WTC11 (cell line): ENCODE measurements at regions of chr17 and their contacts with region 1.

Region 1: DNA sequence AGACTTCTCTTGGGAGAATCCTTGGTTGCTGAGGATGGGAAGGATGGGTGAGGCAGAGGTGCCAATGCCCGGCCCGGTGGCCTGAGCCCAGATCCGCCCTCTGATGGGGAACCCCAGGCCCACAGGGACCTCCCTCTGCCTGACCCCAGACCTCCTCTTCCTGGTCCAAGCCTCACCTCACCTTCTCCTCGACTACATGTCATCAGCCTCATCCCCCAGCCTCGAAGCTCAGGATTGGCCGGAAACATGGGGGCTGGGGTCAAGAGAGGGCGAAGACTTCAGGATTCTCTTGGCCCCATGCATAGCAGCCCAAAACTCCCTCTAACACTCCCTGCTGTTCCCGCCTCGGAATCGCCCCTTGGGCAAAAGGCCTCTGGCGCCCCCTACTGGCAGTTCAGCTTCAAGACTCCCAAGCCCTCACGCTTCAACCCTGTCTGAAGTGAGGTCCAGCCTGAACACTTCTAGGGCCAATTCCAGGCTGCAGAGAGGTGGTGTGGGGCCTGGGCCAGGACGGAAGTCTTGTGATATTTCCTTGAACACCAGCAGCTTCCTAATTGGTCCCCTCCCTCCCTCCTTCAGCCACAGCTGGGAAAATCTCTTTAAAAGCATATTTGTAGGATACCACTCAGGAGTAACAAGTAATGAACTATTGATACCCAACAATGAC is 47.2 kb downstream of the ARHGAP27 start:
- DNase-seq: peak; percentile 94
- ATAC-seq: peak; percentile 86
- H3K4me3 Mint-ChIP-seq: no peak overlapping the region
- H3K27ac Mint-ChIP-seq: no peak overlapping the region
- H3K4me1 Mint-ChIP-seq: peaks cover 24% of the 10 kb centered on the region
- H3K27me3 Mint-ChIP-seq: peaks cover 16% of the 10 kb centered on the region
- CTCF ChIP-seq: peak; percentile 98

Region 2: GRCh38 chr17:45235416-45236281 is 149.8 kb before region 1 on chr17:
- CTCF ChIA-PET with region 1: interaction called, 13 read pairs
- POLR2A ChIA-PET with region 1: no interaction called
- DNase-seq: peak; percentile 94
- ATAC-seq: peak; percentile 69
- H3K4me3 Mint-ChIP-seq: no peak overlapping the region
- H3K27ac Mint-ChIP-seq: no peak overlapping the region
- H3K4me1 Mint-ChIP-seq: peaks cover 9% of the 10 kb centered on the region
- H3K27me3 Mint-ChIP-seq: peaks cover 63% of the 10 kb centered on the region
- CTCF ChIP-seq: peak; percentile 81

Region 3: GRCh38 chr17:45270828-45271418 is 114.5 kb before region 1 on chr17:
- CTCF ChIA-PET with region 1: interaction called, 81 read pairs
- POLR2A ChIA-PET with region 1: no interaction called
- DNase-seq: peak; percentile 81
- ATAC-seq: peak; percentile 94
- H3K4me3 Mint-ChIP-seq: no peak overlapping the region
- H3K27ac Mint-ChIP-seq: no peak overlapping the region
- H3K4me1 Mint-ChIP-seq: peaks cover 8% of the 10 kb centered on the region
- H3K27me3 Mint-ChIP-seq: no peaks in the 10 kb centered on the region
- CTCF ChIP-seq: peak; percentile 79

Region 4: GRCh38 chr17:45317112-45317928 is 68.1 kb before region 1 on chr17:
- CTCF ChIA-PET with region 1: interaction called, 22 read pairs
- POLR2A ChIA-PET with region 1: interaction called, 5 read pairs
- DNase-seq: peak; percentile 100
- ATAC-seq: peak; percentile 92
- H3K4me3 Mint-ChIP-seq: peak overlapping the region; percentile 85
- H3K27ac Mint-ChIP-seq: peak overlapping the region; percentile 90
- H3K4me1 Mint-ChIP-seq: peaks cover 22% of the 10 kb centered on the region
- H3K27me3 Mint-ChIP-seq: peaks cover 37% of the 10 kb centered on the region
- CTCF ChIP-seq: no peak

Region 5: GRCh38 chr17:45371414-45372327 is 13.8 kb before region 1 on chr17:
- CTCF ChIA-PET with region 1: interaction called, 10 read pairs
- POLR2A ChIA-PET with region 1: no interaction called
- DNase-seq: peak; percentile 91
- ATAC-seq: peak; percentile 87
- H3K4me3 Mint-ChIP-seq: peak overlapping the region; percentile 66
- H3K27ac Mint-ChIP-seq: peak overlapping the region; percentile 100
- H3K4me1 Mint-ChIP-seq: peaks cover 53% of the 10 kb centered on the region
- H3K27me3 Mint-ChIP-seq: peaks cover 2% of the 10 kb centered on the region; the same call in 1 of the 2 replicates
- CTCF ChIP-seq: no peak